GM12878 (cell line): ENCODE measurements at regions of chr12 and their contacts with region 1.

Region 1: GRCh38 chr12:127677537-127678131 is 589.3 kb upstream of the TMEM132C start:
- DNase-seq: no peak
- ATAC-seq: peak; percentile 68
- H3K4me3 ChIP-seq: no peak overlapping the region
- H3K27ac ChIP-seq: no peak overlapping the region
- H3K4me1 ChIP-seq: no peaks in the 10 kb centered on the region
- H3K27me3 ChIP-seq: no peaks in the 10 kb centered on the region
- CTCF ChIP-seq: peak; percentile 55 to 60 (median 57)
- EP300 ChIP-seq: no peak
- POLR2A ChIP-seq: no peak
- RAD21 ChIP-seq: peak; percentile 62

Region 2: DNA sequence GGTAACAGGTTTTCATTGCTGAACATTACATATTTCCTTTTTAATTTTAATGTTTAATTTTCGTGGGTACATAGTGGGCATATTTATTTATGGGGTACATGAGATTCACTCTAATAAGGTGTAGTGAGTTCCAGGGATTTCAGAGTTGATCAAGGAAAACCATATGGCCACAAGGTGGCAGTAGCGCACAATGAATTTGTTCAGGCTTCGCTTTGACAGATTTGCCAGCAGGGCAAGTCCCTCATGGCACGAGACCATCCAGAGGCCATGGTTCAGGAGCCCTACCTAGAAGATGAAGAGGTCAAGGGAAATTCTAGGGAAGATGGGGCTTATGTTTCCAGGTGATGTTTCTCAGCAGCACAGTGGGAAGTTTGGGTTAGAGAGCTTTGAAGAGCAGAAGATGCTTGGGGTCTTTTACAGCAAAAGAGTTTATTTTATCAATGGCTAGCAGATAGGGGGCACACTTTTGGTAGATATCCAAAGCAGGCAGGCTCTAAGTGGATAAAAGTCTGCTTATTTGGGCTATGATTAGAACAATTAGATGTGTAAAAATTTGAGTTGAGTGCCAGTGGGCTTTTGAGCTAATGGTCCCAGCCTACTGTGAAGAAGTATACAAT is 1608.0 kb before region 1 on chr12:
- CTCF ChIA-PET with region 1: interaction called, 4 read pairs
- POLR2A ChIA-PET with region 1: no interaction called
- RAD21 ChIA-PET with region 1: no interaction called
- SMC1A ChIA-PET with region 1: no interaction called
- in situ Hi-C with region 1: no loop called
- intact Hi-C with region 1: loop called (anchors 5 kb)
- DNase-seq: no peak
- ATAC-seq: peak; percentile 73
- H3K4me3 ChIP-seq: no peak overlapping the region
- H3K27ac ChIP-seq: no peak overlapping the region
- H3K4me1 ChIP-seq: no peaks in the 10 kb centered on the region
- H3K27me3 ChIP-seq: no peaks in the 10 kb centered on the region
- CTCF ChIP-seq: peak; percentile 45 to 63 (median 61); a peak in 5 of 6 replicates
- EP300 ChIP-seq: no peak
- POLR2A ChIP-seq: no peak
- RAD21 ChIP-seq: peak; percentile 78

Region 3: GRCh38 chr12:127485528-127485927 is 192.1 kb before region 1 on chr12:
- CTCF ChIA-PET with region 1: interaction called, 58 read pairs
- POLR2A ChIA-PET with region 1: no interaction called
- RAD21 ChIA-PET with region 1: interaction called, 23 read pairs
- SMC1A ChIA-PET with region 1: interaction called, 30 read pairs
- in situ Hi-C with region 1: no loop called
- intact Hi-C with region 1: no loop called
- DNase-seq: no peak
- ATAC-seq: no peak
- H3K4me3 ChIP-seq: no peak overlapping the region
- H3K27ac ChIP-seq: no peak overlapping the region
- H3K4me1 ChIP-seq: no peaks in the 10 kb centered on the region
- H3K27me3 ChIP-seq: no peaks in the 10 kb centered on the region
- CTCF ChIP-seq: no peak
- EP300 ChIP-seq: no peak
- POLR2A ChIP-seq: no peak
- RAD21 ChIP-seq: 0 out of 2 replicates have a peak, but pooled peaks have one; percentile 5

Region 4: GRCh38 chr12:127559349-127560040 is 118.1 kb before region 1 on chr12:
- CTCF ChIA-PET with region 1: interaction called, 8 read pairs
- POLR2A ChIA-PET with region 1: no interaction called
- RAD21 ChIA-PET with region 1: interaction called, 4 read pairs
- SMC1A ChIA-PET with region 1: interaction called, 11 read pairs
- in situ Hi-C with region 1: no loop called
- intact Hi-C with region 1: no loop called
- DNase-seq: peak; percentile 11
- ATAC-seq: peak; percentile 66
- H3K4me3 ChIP-seq: no peak overlapping the region
- H3K27ac ChIP-seq: no peak overlapping the region
- H3K4me1 ChIP-seq: no peaks in the 10 kb centered on the region
- H3K27me3 ChIP-seq: no peaks in the 10 kb centered on the region
- CTCF ChIP-seq: peak in 2 of 3 experiments; percentile 3 to 37; a peak in 2 of 6 replicates
- EP300 ChIP-seq: no peak
- POLR2A ChIP-seq: no peak
- RAD21 ChIP-seq: no peak

Region 5: GRCh38 chr12:127667131-127667685 is 10.4 kb before region 1 on chr12:
- CTCF ChIA-PET with region 1: interaction called, 10 read pairs
- POLR2A ChIA-PET with region 1: no interaction called
- RAD21 ChIA-PET with region 1: no interaction called
- SMC1A ChIA-PET with region 1: interaction called, 8 read pairs
- in situ Hi-C with region 1: no loop called
- intact Hi-C with region 1: no loop called
- DNase-seq: no peak
- ATAC-seq: no peak
- H3K4me3 ChIP-seq: no peak overlapping the region
- H3K27ac ChIP-seq: no peak overlapping the region
- H3K4me1 ChIP-seq: no peaks in the 10 kb centered on the region
- H3K27me3 ChIP-seq: no peaks in the 10 kb centered on the region
- CTCF ChIP-seq: no peak
- EP300 ChIP-seq: no peak
- POLR2A ChIP-seq: no peak
- RAD21 ChIP-seq: no peak